ENCODE measurements at regions of chr10 and their contacts with region 1.

Region 1: GRCh38 chr10:98309366-98310355 is 41.7 kb upstream of the LOXL4 start:
- DNase-seq: peak; percentile 35
- ATAC-seq: no peak
- H3K4me3 Mint-ChIP-seq: no peak overlapping the region
- H3K27ac Mint-ChIP-seq: no peak overlapping the region
- H3K4me1 Mint-ChIP-seq: no peaks in the 10 kb centered on the region
- H3K27me3 Mint-ChIP-seq: peaks cover 22% of the 10 kb centered on the region
- CTCF ChIP-seq: peak; percentile 49

Region 2: GRCh38 chr10:98331885-98332284 is 22.2 kb after region 1 on chr10:
- CTCF ChIA-PET with region 1: interaction called, 10 read pairs
- POLR2A ChIA-PET with region 1: no interaction called
- intact Hi-C with region 1: no loop called
- DNase-seq: peak; percentile 39
- ATAC-seq: no peak
- H3K4me3 Mint-ChIP-seq: no peak overlapping the region
- H3K27ac Mint-ChIP-seq: no peak overlapping the region
- H3K4me1 Mint-ChIP-seq: no peaks in the 10 kb centered on the region
- H3K27me3 Mint-ChIP-seq: no peaks in the 10 kb centered on the region
- CTCF ChIP-seq: no peak

Region 3: DNA sequence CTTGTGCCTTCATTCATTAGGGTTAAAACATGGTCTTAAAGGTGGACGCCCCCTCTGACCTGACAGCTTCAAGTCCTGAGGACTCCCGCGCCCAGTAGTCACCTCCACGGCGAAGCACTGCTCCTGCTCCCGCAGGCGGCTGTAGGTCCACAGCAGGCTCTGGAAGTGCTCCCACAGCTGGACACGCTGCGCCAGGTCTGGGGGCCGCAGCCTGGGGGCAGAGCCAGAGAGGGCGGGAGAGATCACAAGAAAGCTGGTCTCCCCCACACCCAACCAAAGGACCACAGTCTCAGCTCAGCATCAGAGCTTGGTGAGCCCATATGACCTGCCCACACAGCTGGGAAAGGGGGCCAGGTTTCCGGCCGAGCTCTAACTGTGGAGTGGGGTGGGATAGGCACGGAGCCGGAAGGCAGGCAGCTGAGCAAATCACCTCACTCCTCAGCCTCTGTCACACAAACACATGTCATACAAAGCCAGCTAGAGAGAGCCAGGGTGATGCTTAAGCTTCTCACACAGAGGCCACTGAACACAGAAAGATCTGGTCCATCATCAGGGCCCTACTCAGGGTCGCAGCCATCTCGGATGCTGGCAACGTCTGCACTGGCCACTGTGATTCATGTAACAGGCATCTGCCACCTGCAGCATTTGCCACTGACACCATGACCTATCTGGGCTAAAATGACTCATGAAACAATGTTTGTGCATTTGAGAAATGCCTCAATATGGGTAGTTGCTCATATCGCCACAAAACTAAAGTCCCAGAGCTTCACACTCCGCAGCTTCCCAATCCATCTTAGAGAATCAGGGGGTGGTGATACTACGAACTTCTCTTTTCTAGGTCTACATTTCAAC is 124.4 kb after region 1 on chr10:
- CTCF ChIA-PET with region 1: no interaction called
- POLR2A ChIA-PET with region 1: no interaction called
- intact Hi-C with region 1: no loop called
- DNase-seq: no peak
- ATAC-seq: no peak
- H3K4me3 Mint-ChIP-seq: no peak overlapping the region
- H3K27ac Mint-ChIP-seq: no peak overlapping the region
- H3K4me1 Mint-ChIP-seq: peaks cover 6% of the 10 kb centered on the region
- H3K27me3 Mint-ChIP-seq: no peaks in the 10 kb centered on the region
- CTCF ChIP-seq: no peak

Region 4: GRCh38 chr10:98486421-98486820 is 176.8 kb after region 1 on chr10:
- CTCF ChIA-PET with region 1: no interaction called
- POLR2A ChIA-PET with region 1: no interaction called
- intact Hi-C with region 1: no loop called
- DNase-seq: no peak
- ATAC-seq: no peak
- H3K4me3 Mint-ChIP-seq: no peak overlapping the region
- H3K27ac Mint-ChIP-seq: no peak overlapping the region
- H3K4me1 Mint-ChIP-seq: peaks cover 4% of the 10 kb centered on the region
- H3K27me3 Mint-ChIP-seq: peaks cover 4% of the 10 kb centered on the region
- CTCF ChIP-seq: no peak